Panc1 (cell line): ENCODE measurements at regions of chr22 and their contacts with region 1.

Region 1: DNA sequence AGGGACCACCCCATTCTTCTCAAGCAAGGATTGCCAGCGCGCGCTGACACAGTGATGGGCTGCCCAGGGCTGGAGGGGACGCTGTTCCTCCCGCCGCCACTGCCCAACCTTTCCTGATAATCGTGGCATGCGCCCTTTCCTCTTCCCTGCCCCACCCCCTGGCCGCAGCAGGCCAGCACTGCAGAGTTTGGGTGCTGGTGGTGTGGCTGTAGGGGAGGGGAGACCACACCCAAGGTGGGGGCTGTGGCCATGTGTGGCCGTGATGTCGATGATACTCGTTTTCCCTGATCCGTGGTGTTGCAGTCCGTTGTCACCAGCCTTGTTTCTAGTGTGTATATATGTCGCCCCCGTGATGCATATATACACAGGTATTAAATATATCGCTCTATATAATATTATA is 22.8 kb upstream of the TEF start:
- DNase-seq: no peak
- ATAC-seq: 0 out of 2 replicates have a peak, but pooled peaks have one; percentile 10
- H3K4me3 ChIP-seq: no peak overlapping the region
- H3K27ac ChIP-seq: no peak overlapping the region
- H3K4me1 ChIP-seq: peaks cover 16% of the 10 kb centered on the region
- H3K27me3 ChIP-seq: no peaks in the 10 kb centered on the region
- CTCF ChIP-seq: no peak

Region 2: DNA sequence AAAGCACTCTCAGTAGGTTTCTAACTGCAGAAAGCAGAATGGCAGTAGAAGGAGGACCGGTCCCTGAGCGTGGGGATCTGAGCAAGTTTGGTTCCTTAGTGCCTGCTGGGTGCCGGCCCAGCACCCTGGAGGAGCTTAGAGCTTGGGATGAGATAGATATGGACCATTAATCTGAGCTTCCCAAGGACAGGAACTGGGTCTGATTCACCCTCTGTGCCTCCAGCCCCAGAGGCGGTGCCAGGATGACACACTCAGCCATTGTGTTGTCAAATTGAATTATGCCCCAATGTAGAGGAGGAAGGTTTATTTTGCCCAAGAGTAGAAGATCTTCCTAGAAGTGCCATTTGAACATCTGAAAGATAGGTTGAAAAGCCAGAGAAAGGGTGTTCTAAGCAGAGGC is 53.3 kb before region 1 on chr22:
- CTCF ChIA-PET with region 1: interaction called, 10 read pairs
- POLR2A ChIA-PET with region 1: no interaction called
- in situ Hi-C with region 1: no loop called
- intact Hi-C with region 1: no loop called
- DNase-seq: no peak
- ATAC-seq: peak; percentile 50
- H3K4me3 ChIP-seq: no peak overlapping the region
- H3K27ac ChIP-seq: peak overlapping the region; percentile 69; the same call in 1 of the 2 replicates
- H3K4me1 ChIP-seq: peaks cover 30% of the 10 kb centered on the region
- H3K27me3 ChIP-seq: no peaks in the 10 kb centered on the region
- CTCF ChIP-seq: no peak

Region 3: DNA sequence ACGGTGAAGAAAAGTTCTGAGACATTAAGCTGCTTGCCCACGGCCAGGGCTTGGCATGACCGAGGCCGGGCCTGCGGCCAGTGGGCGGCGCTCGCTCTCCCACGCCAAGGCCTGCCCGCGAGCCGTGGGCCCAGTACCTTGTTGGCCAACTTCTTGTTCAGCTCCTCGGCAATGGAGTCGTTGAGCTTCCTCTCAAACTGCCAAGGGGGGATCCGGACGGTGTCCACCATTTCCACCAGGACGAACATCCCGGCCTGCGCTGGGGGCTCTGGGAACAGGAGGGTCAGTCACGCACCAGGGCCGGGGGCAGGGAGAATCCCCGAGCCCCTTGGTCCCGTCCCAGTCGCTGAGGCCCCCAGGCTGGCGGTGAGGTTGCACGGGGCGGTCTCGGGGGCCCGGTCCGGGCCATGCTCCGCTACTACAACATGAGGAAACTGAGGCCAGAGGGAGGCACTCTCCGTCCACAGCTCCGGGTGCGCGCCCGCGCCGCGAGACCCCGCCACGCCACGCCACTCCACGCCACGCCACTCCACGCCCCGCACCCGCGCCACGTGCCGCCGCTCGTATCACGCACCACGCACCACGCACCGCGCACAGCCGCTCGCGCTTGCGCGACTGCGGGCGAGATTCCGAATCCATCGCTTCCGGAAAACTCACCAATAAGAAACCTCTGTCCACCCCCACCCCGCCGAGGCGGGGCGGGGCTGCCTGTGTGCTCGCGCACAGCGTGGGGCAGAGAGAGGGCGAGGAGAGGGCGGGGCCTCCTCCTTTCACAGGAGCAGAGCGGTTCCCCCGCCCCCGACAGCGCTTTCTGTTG is 185.1 kb after region 1 on chr22 and contains the start of gene POLR3H:
- CTCF ChIA-PET with region 1: no interaction called
- POLR2A ChIA-PET with region 1: no interaction called
- in situ Hi-C with region 1: no loop called
- intact Hi-C with region 1: no loop called
- DNase-seq: peak; percentile 77
- ATAC-seq: peak; percentile 98
- H3K4me3 ChIP-seq: peak within 1 kb of the TSS; percentile 78 to 85
- H3K27ac ChIP-seq: peak within 1 kb of the TSS; percentile 88
- H3K4me1 ChIP-seq: peaks cover 10% of the 10 kb centered on the region
- H3K27me3 ChIP-seq: no peaks in the 10 kb centered on the region
- CTCF ChIP-seq: peak; percentile 87
- total RNA-seq, gene POLR3H: 46.6 TPM